ENCODE measurements at regions of chr6 and their contacts with region 1.

Region 1: DNA sequence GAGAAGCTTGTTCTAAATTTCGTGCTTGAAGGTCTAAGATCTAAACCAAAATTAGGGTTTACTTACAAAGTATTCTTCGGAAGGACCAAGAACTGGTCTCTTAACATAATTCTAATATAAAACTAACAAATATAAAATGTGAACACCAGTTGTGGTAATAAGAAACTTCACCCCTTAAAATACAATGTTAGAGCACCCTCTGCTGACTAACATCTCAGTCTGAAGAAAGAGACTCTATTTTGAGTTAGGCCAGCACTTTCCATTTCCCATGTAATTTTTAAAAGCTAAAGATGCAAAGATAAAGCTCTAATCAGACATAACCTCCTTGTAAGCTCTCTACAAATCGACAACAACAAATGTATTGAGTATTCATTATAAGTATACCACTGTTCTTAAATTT is 24.6 kb downstream of the ATG5 start:
- DNase-seq: peak; percentile 42
- H3K4me3 ChIP-seq: no peak overlapping the region
- H3K27ac ChIP-seq: no peak overlapping the region
- H3K4me1 ChIP-seq: no peaks in the 10 kb centered on the region
- H3K27me3 ChIP-seq: no peaks in the 10 kb centered on the region
- CTCF ChIP-seq: peak; percentile 42 to 54

Region 2: GRCh38 chr6:105431226-105431625 is 869.7 kb before region 1 on chr6:
- CTCF ChIA-PET with region 1: no interaction called
- dilution Hi-C with region 1: no loop called
- in situ Hi-C with region 1: no loop called
- intact Hi-C with region 1: loop called (anchors 2 kb)
- DNase-seq: peak; percentile 46
- H3K4me3 ChIP-seq: no peak overlapping the region
- H3K27ac ChIP-seq: no peak overlapping the region
- H3K4me1 ChIP-seq: peaks cover 35% of the 10 kb centered on the region
- H3K27me3 ChIP-seq: no peaks in the 10 kb centered on the region
- CTCF ChIP-seq: peak; percentile 57

Region 3: GRCh38 chr6:105591053-105591452 is 709.9 kb before region 1 on chr6:
- CTCF ChIA-PET with region 1: interaction called, 3 read pairs
- dilution Hi-C with region 1: no loop called
- in situ Hi-C with region 1: no loop called
- intact Hi-C with region 1: loop called (anchors 10 kb)
- DNase-seq: peak; percentile 95
- H3K4me3 ChIP-seq: no peak overlapping the region
- H3K27ac ChIP-seq: peak overlapping the region; percentile 99
- H3K4me1 ChIP-seq: peaks cover 77% of the 10 kb centered on the region
- H3K27me3 ChIP-seq: no peaks in the 10 kb centered on the region
- CTCF ChIP-seq: no peak

Region 4: GRCh38 chr6:105733565-105734162 is 567.3 kb before region 1 on chr6:
- CTCF ChIA-PET with region 1: no interaction called
- dilution Hi-C with region 1: no loop called
- in situ Hi-C with region 1: loop called in 1 of 2 experiments (anchors 25 kb)
- intact Hi-C with region 1: loop called (anchors 2 kb)
- DNase-seq: no peak
- H3K4me3 ChIP-seq: no peak overlapping the region
- H3K27ac ChIP-seq: no peak overlapping the region
- H3K4me1 ChIP-seq: no peaks in the 10 kb centered on the region
- H3K27me3 ChIP-seq: no peaks in the 10 kb centered on the region
- CTCF ChIP-seq: peak; percentile 59 to 62

Region 5: GRCh38 chr6:105967917-105968584 is 332.9 kb before region 1 on chr6:
- CTCF ChIA-PET with region 1: no interaction called
- dilution Hi-C with region 1: no loop called
- in situ Hi-C with region 1: no loop called
- intact Hi-C with region 1: no loop called
- DNase-seq: no peak
- H3K4me3 ChIP-seq: no peak overlapping the region
- H3K27ac ChIP-seq: no peak overlapping the region
- H3K4me1 ChIP-seq: no peaks in the 10 kb centered on the region
- H3K27me3 ChIP-seq: no peaks in the 10 kb centered on the region
- CTCF ChIP-seq: no peak

Region 6: GRCh38 chr6:105992315-105992961 is 308.5 kb before region 1 on chr6:
- CTCF ChIA-PET with region 1: no interaction called
- dilution Hi-C with region 1: no loop called
- in situ Hi-C with region 1: no loop called
- intact Hi-C with region 1: loop called (anchors 5 kb)
- DNase-seq: peak; percentile 67
- H3K4me3 ChIP-seq: peak overlapping the region; percentile 61 to 76 (median 62)
- H3K27ac ChIP-seq: peak overlapping the region; percentile 67
- H3K4me1 ChIP-seq: peaks cover 25% of the 10 kb centered on the region
- H3K27me3 ChIP-seq: no peaks in the 10 kb centered on the region
- CTCF ChIP-seq: no peak

Region 7: DNA sequence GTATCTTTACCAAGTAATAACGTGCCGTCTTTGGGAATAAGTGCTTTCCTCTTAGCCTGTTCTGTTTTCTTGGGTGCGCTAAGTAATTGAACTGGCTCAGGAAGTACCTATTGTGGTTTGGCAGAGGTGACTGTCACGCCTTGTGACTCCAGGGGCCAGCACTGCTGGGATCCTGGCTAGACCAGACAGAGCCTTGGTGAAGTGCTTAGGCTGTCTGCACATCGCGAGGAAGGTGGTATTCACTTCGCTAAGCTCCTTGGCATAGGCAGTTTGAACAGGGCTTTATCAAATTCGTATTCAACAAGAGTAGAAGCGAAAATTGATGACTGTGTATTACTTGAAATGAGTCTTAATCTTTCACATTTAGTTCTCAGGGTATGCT is 197.2 kb before region 1 on chr6:
- CTCF ChIA-PET with region 1: no interaction called
- dilution Hi-C with region 1: no loop called
- in situ Hi-C with region 1: no loop called
- intact Hi-C with region 1: loop called (anchors 5 kb)
- DNase-seq: peak; percentile 59
- H3K4me3 ChIP-seq: peak overlapping the region; percentile 22 to 40 (median 27)
- H3K27ac ChIP-seq: peak overlapping the region; percentile 53
- H3K4me1 ChIP-seq: peaks cover 27% of the 10 kb centered on the region
- H3K27me3 ChIP-seq: no peaks in the 10 kb centered on the region
- CTCF ChIP-seq: no peak

Region 8: DNA sequence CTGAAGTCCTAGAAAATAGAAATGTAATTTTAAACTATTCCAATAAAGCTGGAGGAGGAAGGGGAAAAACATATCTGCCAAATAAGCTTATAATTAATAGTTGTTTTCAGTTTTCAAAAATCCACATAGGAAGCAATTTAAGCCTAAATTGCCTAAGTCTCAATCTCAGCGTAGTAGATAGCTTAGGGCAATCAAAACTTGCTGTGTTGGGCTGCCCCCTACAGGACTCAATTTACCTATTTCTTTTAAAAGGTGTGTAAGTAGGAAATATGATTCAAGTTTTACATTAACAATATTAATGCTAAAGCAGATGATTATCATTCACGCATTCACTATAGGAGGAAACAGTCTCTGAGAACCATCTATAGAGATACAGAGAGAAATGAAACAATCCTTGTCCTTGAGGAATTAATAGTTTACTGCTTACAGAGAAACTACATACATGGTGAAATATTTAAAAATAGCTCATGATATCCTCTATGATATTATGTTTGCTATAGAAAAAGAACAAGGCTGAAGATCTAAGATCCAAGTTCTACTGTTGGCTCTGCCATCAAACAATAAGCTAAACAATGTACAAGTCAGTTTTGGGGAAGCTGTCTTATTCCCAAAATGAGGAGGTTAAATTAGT is 77.5 kb before region 1 on chr6:
- CTCF ChIA-PET with region 1: no interaction called
- dilution Hi-C with region 1: no loop called
- in situ Hi-C with region 1: no loop called
- intact Hi-C with region 1: loop called (anchors 2 kb)
- DNase-seq: peak; percentile 58
- H3K4me3 ChIP-seq: no peak overlapping the region
- H3K27ac ChIP-seq: no peak overlapping the region
- H3K4me1 ChIP-seq: no peaks in the 10 kb centered on the region
- H3K27me3 ChIP-seq: no peaks in the 10 kb centered on the region
- CTCF ChIP-seq: peak; percentile 53 to 61

Region 9: DNA sequence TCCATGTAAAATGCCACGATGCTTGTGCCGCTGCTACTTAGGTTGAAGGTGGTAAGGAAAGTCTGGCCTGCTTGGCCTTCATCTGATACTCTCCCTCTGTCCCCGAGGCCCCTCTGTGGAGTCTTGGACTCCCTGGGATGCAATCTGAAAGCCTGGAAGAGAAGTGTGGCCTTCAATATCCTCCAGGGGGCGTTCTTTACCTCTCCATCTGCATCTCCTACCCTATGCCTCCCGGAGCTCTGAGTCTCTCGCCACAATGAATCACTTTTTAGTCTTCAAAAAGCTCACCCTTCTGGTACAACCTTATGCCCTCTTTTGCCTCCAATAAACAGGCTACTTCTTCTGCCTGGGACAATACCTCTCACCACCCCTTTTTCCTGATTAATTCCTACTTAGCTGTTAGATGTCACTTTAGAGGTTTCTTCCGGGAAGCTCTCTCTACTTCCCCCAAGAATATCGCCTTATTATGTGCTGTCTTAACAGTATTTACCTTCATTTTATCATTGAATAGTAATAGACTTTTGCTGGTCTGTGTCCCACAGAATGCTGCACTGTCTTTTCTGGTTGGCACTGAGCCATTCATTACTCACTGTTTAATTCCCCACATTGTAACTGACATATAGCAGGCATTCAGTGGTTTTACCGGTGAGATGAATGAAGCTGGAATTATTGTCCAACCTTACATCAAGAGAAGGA is 38.5 kb after region 1 on chr6:
- CTCF ChIA-PET with region 1: no interaction called
- dilution Hi-C with region 1: no loop called
- in situ Hi-C with region 1: no loop called
- intact Hi-C with region 1: no loop called
- DNase-seq: peak; percentile 86
- H3K4me3 ChIP-seq: no peak overlapping the region
- H3K27ac ChIP-seq: peak overlapping the region; percentile 13
- H3K4me1 ChIP-seq: peaks cover 13% of the 10 kb centered on the region
- H3K27me3 ChIP-seq: no peaks in the 10 kb centered on the region
- CTCF ChIP-seq: peak; percentile 82 to 91